ENCODE measurements at regions of chr1 and their contacts with region 1.

Region 1: DNA sequence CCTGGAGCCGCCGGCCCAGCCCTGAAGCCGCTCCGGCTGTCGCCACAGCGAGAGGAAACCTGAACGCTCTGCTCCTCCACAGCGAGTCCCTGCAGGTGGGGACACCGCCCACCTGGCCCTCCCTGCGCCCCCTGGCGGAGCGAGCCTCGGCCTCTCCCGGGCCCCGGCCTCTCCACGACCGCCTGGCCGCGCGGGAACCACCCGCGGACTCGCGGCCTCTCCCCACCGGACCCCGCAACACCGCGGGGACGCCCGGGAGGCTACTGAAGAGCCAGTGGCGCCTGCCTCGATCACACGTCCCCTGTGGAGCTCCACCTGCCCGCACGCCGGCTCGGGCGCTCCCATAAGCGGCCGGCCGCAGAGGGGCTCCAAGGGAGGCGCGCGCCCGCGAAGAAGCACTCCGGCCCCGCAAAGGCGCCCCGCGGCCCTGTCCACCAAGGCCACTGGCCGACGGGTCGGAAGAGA is 109.6 kb downstream of the KCNN3 start:
- DNase-seq: peak; percentile 45
- H3K4me3 Mint-ChIP-seq: no peak overlapping the region
- H3K27ac Mint-ChIP-seq: no peak overlapping the region
- H3K4me1 Mint-ChIP-seq: no peaks in the 10 kb centered on the region
- H3K27me3 Mint-ChIP-seq: peaks cover 85% of the 10 kb centered on the region
- CTCF ChIP-seq: peak; percentile 51

Region 2: GRCh38 chr1:154819628-154820590 is 59.4 kb after region 1 on chr1:
- CTCF ChIA-PET with region 1: interaction called, 3 read pairs
- POLR2A ChIA-PET with region 1: no interaction called
- intact Hi-C with region 1: loop called (anchors 10 kb)
- DNase-seq: peak; percentile 49
- H3K4me3 Mint-ChIP-seq: no peak overlapping the region
- H3K27ac Mint-ChIP-seq: no peak overlapping the region
- H3K4me1 Mint-ChIP-seq: peaks cover 6% of the 10 kb centered on the region
- H3K27me3 Mint-ChIP-seq: no peaks in the 10 kb centered on the region
- CTCF ChIP-seq: peak; percentile 76

Region 3: DNA sequence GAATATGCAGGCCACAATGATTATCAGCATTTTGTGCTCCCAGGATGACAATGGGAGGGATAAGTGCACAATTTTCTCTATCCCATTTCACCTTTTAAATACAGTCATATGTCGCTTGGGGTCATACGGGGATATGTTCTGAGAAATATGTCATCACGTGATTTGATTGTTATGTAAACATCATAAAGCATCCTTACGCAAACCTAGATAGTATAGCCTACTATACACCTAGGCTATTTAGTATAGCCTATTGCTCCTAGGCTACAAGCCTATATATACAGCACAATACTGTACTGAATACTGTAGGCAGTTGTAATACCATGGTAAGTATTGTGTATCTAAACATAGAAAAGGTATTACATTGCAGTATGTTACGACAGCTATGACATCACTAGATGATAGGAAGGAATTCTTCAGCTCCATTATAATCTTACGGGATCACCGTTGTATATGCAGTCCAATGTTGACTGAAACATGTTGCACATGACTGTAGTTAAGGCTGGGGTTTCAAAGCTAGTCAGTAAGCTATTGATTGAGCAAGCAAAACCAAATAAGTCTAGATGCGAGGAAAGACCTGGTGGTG is 579.1 kb after region 1 on chr1:
- CTCF ChIA-PET with region 1: no interaction called
- POLR2A ChIA-PET with region 1: no interaction called
- intact Hi-C with region 1: no loop called
- DNase-seq: no peak
- H3K4me3 Mint-ChIP-seq: no peak overlapping the region
- H3K27ac Mint-ChIP-seq: no peak overlapping the region
- H3K4me1 Mint-ChIP-seq: no peaks in the 10 kb centered on the region
- H3K27me3 Mint-ChIP-seq: no peaks in the 10 kb centered on the region
- CTCF ChIP-seq: no peak

Measured in MCF 10A (cell line).